Thyroid gland (tissue), 4 donors: ENCODE measurements at regions of chr13 and their contacts with region 1.

Region 1: DNA sequence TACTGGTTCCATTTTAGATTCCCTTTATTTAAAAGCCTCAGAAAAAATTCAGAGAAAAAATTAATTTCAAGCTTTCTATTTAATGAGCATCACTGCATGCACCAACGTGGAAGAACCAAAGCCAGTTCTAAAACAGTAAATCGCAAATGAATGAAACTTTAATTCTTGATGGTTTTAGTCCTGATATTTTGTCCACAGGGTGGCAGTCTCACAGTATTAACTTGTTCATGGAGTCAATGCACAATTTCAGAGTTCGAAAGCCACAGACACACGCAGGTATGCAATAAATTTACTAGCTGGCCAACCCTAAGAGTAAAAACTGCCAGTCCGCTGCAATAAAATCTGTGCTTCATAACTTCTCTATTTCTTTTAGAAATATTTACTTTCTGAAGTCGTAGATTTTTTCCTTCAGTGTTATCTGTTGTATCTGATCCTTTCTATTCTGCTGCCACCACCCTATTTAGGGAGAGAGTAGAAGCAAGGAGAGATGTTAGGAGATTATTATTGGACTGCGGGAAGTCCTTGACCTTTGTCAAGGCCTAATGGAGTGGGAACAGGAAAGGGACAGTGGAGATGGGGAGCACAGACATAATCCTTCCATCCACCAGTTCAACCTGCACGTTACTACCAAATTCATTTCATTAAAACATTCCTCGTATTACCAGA is 7.0 kb upstream of the WBP4 start:
- DNase-seq: no peak
- H3K4me3 ChIP-seq: no peak overlapping the region
- H3K27ac ChIP-seq: peak overlapping the region in 1 of 3 donors; percentile 2
- H3K4me1 ChIP-seq: peaks cover 45 to 70% of the 10 kb centered on the region in 2 donors
- H3K27me3 ChIP-seq: no peaks in the 10 kb centered on the region
- CTCF ChIP-seq: peak; percentile 14 to 52 (median 40)
- POLR2A ChIP-seq: no peak

Region 2: GRCh38 chr13:40992678-40993518 is 61.4 kb before region 1 on chr13:
- intact Hi-C with region 1: loop called (anchors 10 kb)
- DNase-seq: no peak
- H3K4me3 ChIP-seq: no peak overlapping the region
- H3K27ac ChIP-seq: peak overlapping the region; percentile 92 to 97 (median 93)
- H3K4me1 ChIP-seq: peaks cover 51 to 64% of the 10 kb centered on the region in 2 donors
- H3K27me3 ChIP-seq: no peaks in the 10 kb centered on the region
- CTCF ChIP-seq: peak in 3 of 6 experiments; percentile 37 to 42 (median 40)
- POLR2A ChIP-seq: no peak